Heart left ventricle (tissue), 16 donors: ENCODE measurements at regions of chr11 and their contacts with region 1.

Region 1: DNA sequence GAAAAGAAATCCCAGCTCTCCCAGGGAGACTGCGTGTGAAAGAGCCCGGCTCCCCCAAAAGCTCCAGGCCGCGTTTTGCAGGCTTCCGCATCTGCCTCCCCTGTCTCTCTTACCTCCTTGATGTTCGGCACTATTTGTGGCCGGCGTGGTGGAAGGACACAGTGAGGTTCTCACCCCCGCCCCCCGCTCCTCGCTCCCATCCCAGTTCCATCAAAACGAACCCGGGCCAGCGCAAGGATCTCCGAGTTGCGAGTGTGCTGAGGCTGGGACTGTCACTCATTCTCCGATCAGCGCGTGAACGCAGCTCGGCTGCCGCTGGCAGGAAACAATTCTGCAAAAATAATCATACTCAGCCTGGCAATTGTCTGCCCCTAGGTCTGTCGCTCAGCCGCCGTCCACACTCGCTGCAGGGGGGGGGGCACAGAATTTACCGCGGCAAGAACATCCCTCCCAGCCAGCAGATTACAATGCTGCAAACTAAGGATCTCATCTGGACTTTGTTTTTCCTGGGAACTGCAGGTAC is at the start of gene NCAM1:
- DNase-seq: peak; percentile 82 to 92 (median 88)
- ATAC-seq: peak; percentile 71 to 84 (median 75)
- H3K4me3 ChIP-seq: peak within 1 kb of the TSS; percentile 55 to 93 (median 68)
- H3K27ac ChIP-seq: peak within 1 kb of the TSS; percentile 52 to 90 (median 81)
- H3K4me1 ChIP-seq: peaks cover 0 to 39% (median 9%) of the 10 kb centered on the region in 12 donors
- H3K27me3 ChIP-seq: peaks cover 0 to 71% (median 8%) of the 10 kb centered on the region in 9 donors
- CTCF ChIP-seq: no peak
- POLR2A ChIP-seq: no peak
- total RNA-seq, gene NCAM1: 190 to 753 (median 398) TPM

Region 2: GRCh38 chr11:112289588-112290492 is 671.4 kb before region 1 on chr11:
- intact Hi-C with region 1: loop called in 1 of 10 experiments (anchors 5 kb)
- DNase-seq: peak; percentile 83 to 93 (median 88)
- ATAC-seq: peak; percentile 60 to 90 (median 87)
- H3K4me3 ChIP-seq: peak overlapping the region; percentile 49 to 89 (median 62)
- H3K27ac ChIP-seq: peak overlapping the region; percentile 24 to 91 (median 80)
- H3K4me1 ChIP-seq: peaks cover 0 to 44% (median 16%) of the 10 kb centered on the region in 12 donors
- H3K27me3 ChIP-seq: no peaks in the 10 kb centered on the region
- CTCF ChIP-seq: peak; percentile 66 to 96 (median 87)
- POLR2A ChIP-seq: peak in 1 of 2 donors; percentile 66

Region 3: DNA sequence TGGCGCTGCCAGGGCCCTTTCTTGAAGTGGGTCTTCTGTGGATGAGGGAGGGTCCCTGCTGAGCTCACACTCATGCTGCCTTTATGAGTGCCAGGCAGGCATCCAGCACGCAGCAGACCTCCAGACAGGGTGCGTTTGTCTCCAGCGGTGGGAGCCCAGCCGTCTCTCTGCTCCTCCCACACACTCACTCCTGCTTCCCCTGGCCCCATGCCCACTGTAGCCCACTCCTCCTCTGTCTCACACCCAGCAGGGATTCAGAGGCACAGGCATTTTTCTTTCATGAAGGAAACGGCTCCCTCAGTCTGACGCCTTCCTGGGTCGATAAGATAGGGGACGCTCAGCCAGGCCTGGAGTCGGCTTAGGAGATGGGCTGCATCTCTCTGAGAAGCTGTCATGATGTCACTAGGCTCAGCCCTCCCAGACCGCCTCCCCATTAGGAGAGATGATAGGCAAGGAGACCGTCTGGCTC is 183.9 kb before region 1 on chr11:
- intact Hi-C with region 1: loop called in 2 of 10 experiments (anchors 5 to 10 kb)
- DNase-seq: peak in 1 of 5 donors; percentile 58
- ATAC-seq: peak in 2 of 4 donors; percentile 33 to 45
- H3K4me3 ChIP-seq: no peak overlapping the region
- H3K27ac ChIP-seq: peak overlapping the region; percentile 18 to 84 (median 70)
- H3K4me1 ChIP-seq: peaks cover 0 to 48% (median 24%) of the 10 kb centered on the region in 12 donors
- H3K27me3 ChIP-seq: no peaks in the 10 kb centered on the region
- CTCF ChIP-seq: no peak
- POLR2A ChIP-seq: no peak

Region 4: DNA sequence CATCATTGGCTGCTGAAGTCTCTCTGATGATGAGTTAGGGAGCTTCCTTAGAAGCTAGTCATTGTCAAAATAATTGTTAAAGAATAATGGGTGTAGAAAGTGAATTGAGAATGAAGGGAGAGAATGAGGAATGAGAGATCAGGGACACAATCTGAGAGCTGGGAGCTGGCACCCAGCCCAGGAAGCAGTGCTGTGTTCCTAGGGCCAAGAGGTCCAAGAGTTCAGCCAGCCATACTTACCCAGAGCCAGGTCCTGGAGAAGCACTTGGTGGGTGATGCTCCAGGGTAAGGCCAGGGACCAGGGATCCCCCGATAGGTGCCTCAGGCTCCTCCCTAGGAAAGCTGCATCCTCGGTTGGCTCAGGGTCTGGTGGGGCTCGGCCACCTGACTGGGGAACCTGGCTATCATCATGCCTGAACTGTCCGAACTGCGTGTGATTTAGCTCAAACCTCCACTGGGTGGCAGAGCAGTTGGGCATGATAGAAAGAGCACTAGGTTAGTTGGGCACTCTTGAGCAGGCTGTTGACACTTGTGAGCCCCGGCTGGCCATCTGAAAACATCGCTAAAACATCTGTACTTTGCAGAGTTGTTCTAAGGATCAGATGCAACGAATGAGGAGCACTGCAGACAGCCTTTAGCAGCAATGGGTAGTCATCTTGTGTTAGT is 123.9 kb before region 1 on chr11:
- intact Hi-C with region 1: loop called in 9 of 10 experiments (anchors 1 to 10 kb)
- DNase-seq: peak in 4 of 5 donors; percentile 37 to 56 (median 42)
- ATAC-seq: peak; percentile 34 to 72 (median 64)
- H3K4me3 ChIP-seq: no peak overlapping the region
- H3K27ac ChIP-seq: no peak overlapping the region
- H3K4me1 ChIP-seq: peaks cover 0 to 23% (median 5%) of the 10 kb centered on the region in 12 donors
- H3K27me3 ChIP-seq: no peaks in the 10 kb centered on the region
- CTCF ChIP-seq: peak in 10 of 12 donors; percentile 24 to 50 (median 42)
- POLR2A ChIP-seq: no peak

Region 5: GRCh38 chr11:112903340-112903739 is 57.9 kb before region 1 on chr11:
- intact Hi-C with region 1: no loop called
- DNase-seq: no peak
- ATAC-seq: no peak
- H3K4me3 ChIP-seq: no peak overlapping the region
- H3K27ac ChIP-seq: no peak overlapping the region
- H3K4me1 ChIP-seq: peaks cover 0 to 18% (median 6%) of the 10 kb centered on the region in 12 donors
- H3K27me3 ChIP-seq: no peaks in the 10 kb centered on the region
- CTCF ChIP-seq: no peak
- POLR2A ChIP-seq: no peak

Region 6: GRCh38 chr11:112942966-112943643 is 18.1 kb before region 1 on chr11:
- intact Hi-C with region 1: no loop called
- DNase-seq: peak in 1 of 5 donors; percentile 56
- ATAC-seq: peak; percentile 80 to 91 (median 88)
- H3K4me3 ChIP-seq: no peak overlapping the region
- H3K27ac ChIP-seq: peak overlapping the region in 11 of 12 donors; percentile 47 to 91 (median 75)
- H3K4me1 ChIP-seq: peaks cover 0 to 15% (median 1%) of the 10 kb centered on the region in 12 donors
- H3K27me3 ChIP-seq: peaks cover 0 to 6% (median 0%) of the 10 kb centered on the region in 9 donors
- CTCF ChIP-seq: no peak
- POLR2A ChIP-seq: no peak

Region 7: DNA sequence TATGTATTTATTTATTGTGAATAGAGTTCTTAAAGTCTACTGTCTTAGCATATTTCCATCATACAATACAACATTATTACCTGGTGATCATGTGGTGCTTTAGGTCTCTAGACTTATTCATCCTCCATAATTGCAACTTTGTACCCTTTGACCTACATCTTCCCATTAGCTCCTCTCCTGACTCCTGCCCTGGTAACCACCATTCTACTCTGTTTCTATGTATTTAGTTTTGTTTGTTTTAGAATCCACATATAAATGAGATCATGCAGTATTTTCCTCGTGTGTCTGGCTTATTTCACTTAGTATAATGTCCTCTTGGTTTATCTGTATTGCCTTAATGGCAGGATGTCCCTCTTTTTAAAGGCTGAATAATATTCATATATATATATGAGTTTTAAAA is 22.7 kb after region 1 on chr11:
- intact Hi-C with region 1: no loop called
- DNase-seq: no peak
- ATAC-seq: no peak
- H3K4me3 ChIP-seq: no peak overlapping the region
- H3K27ac ChIP-seq: no peak overlapping the region
- H3K4me1 ChIP-seq: peaks cover 0 to 13% (median 0%) of the 10 kb centered on the region in 12 donors
- H3K27me3 ChIP-seq: no peaks in the 10 kb centered on the region
- CTCF ChIP-seq: no peak
- POLR2A ChIP-seq: no peak

Region 8: GRCh38 chr11:113014262-113015097 is 53.3 kb after region 1 on chr11:
- intact Hi-C with region 1: loop called in 2 of 10 experiments (anchors 5 to 10 kb)
- DNase-seq: peak; percentile 65 to 86 (median 78)
- ATAC-seq: peak; percentile 96 to 98 (median 98)
- H3K4me3 ChIP-seq: no peak overlapping the region
- H3K27ac ChIP-seq: peak overlapping the region in 6 of 12 donors; percentile 6 to 47 (median 38)
- H3K4me1 ChIP-seq: peaks cover 0 to 38% (median 16%) of the 10 kb centered on the region in 12 donors
- H3K27me3 ChIP-seq: no peaks in the 10 kb centered on the region
- CTCF ChIP-seq: peak in 3 of 12 donors; percentile 20 to 28 (median 26)
- POLR2A ChIP-seq: no peak

Region 9: DNA sequence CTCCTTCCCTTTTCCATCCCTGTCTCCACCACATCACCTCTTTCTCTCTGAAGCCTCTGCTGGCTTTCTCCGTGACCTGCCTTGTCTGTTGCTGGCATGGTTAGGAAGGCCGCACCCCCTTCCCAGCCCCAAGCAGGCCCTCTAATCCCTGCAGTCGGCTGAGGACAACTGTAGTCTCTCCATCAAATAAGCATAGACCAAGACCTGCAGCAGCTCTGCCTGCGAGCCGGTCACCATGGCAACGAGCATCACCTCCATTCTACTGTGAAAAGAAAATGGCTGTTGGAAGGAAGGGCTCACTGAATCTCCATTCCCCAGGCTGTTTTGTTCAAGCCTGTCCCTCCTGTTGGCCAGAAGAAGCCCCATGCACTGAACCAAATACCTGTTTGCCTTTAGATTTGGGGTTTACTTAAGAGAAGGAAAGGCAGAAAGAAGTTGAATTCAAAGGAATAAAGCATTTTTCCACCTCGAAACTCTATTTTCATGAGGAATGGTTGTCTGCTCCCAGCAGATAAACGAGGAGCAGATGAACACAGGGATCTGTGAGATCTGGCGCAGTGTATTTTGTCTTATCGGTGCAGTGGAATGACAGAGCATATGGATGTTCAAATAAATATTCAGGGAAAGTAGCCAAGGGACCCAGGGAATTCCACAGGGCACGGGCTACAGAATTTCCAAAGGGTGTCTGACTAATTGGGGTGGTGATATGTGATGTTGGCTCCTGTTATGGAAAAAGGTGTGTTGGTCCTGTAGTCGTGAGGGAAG is 240.0 kb after region 1 on chr11:
- intact Hi-C with region 1: loop called in 1 of 10 experiments (anchors 10 kb)
- DNase-seq: no peak
- ATAC-seq: no peak
- H3K4me3 ChIP-seq: no peak overlapping the region
- H3K27ac ChIP-seq: no peak overlapping the region
- H3K4me1 ChIP-seq: peaks cover 0 to 24% (median 1%) of the 10 kb centered on the region in 12 donors
- H3K27me3 ChIP-seq: no peaks in the 10 kb centered on the region
- CTCF ChIP-seq: no peak
- POLR2A ChIP-seq: no peak